Mammary epithelial cell (primary cell): ENCODE measurements at regions of chr3 and their contacts with region 1.

Region 1: GRCh38 chr3:150216041-150216811 is 191.9 kb upstream of the TSC22D2 start:
- DNase-seq: peak; percentile 56
- H3K4me3 ChIP-seq: no peak overlapping the region
- H3K27ac ChIP-seq: no peak overlapping the region
- H3K4me1 ChIP-seq: peaks cover 16% of the 10 kb centered on the region
- H3K27me3 ChIP-seq: no peaks in the 10 kb centered on the region
- CTCF ChIP-seq: no peak

Region 2: DNA sequence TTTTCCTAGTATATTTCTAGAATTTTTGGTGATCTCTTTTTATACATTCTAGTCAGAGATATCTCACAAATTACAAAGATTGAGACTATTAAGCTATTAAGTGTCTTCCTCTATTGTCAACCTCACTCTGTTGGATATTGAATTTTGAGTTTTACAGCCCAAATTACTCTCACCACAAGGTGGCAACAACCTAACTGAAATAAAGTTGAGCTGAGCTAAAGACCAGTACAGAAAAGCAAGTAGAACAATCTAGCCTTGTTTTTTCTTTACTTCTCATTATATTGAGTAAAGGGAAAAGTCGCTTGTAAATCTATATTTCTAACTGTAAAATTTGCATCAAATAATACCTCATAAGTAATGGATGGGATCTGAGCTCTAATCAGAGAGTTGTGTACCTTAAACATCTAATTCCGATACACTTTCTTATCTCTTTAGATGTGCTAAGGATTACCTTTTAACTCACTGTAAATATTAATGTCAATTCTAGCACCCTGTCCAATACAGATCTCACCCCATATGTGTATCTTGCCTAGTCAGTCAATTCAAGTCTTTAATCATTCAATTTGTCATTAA is 450.4 kb before region 1 on chr3:
- CTCF ChIA-PET with region 1: no interaction called
- dilution Hi-C with region 1: no loop called
- in situ Hi-C with region 1: no loop called
- intact Hi-C with region 1: loop called (anchors 5 kb)
- DNase-seq: peak; percentile 21
- H3K4me3 ChIP-seq: no peak overlapping the region
- H3K27ac ChIP-seq: no peak overlapping the region
- H3K4me1 ChIP-seq: no peaks in the 10 kb centered on the region
- H3K27me3 ChIP-seq: no peaks in the 10 kb centered on the region
- CTCF ChIP-seq: peak; percentile 37 to 62

Region 3: DNA sequence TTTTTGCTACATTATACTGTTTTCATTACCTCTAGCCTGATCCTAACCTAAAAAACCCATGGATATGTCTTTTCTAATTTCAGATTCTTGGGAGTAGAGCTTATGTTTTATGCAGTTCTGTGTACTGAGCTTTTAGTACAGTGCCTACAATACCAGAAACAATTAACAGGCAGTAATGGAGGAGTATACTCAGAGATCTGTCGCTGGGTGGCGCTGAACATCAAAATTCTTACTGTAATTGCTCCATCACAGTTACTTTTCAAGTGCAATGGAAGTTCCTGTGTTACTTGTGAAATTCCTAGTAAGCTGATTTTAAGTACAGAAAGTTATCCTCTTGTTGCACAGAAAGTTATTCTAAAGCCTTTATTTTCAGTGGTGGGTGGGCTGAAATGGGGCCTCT is 336.4 kb before region 1 on chr3:
- CTCF ChIA-PET with region 1: interaction called, 3 read pairs
- dilution Hi-C with region 1: no loop called
- in situ Hi-C with region 1: no loop called
- intact Hi-C with region 1: loop called (anchors 5 kb)
- DNase-seq: peak; percentile 49
- H3K4me3 ChIP-seq: no peak overlapping the region
- H3K27ac ChIP-seq: no peak overlapping the region
- H3K4me1 ChIP-seq: no peaks in the 10 kb centered on the region
- H3K27me3 ChIP-seq: no peaks in the 10 kb centered on the region
- CTCF ChIP-seq: peak; percentile 71 to 84

Region 4: DNA sequence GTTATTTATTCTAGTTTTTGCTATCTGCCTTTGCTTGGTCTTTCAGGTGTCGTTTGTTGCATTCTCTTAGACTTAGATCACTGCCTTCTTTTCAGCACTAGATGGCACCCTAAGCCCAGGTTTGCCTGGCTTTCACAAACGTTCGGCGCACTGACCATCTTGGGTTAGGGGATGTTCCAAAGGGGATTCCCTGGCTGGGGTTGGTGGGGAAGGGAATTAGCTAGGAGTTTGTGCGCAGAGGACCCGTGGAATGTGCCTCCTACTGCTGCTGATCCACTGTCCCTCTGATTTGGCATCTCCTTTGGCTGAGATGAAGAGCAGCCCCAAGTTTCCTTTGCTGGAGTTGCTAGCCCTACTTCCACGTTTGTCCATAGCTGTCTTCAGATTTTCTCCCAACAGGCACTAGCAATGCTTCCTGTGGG is 279.4 kb before region 1 on chr3:
- CTCF ChIA-PET with region 1: no interaction called
- dilution Hi-C with region 1: no loop called
- in situ Hi-C with region 1: no loop called
- intact Hi-C with region 1: loop called (anchors 1 kb)
- DNase-seq: peak; percentile 32
- H3K4me3 ChIP-seq: no peak overlapping the region
- H3K27ac ChIP-seq: no peak overlapping the region
- H3K4me1 ChIP-seq: no peaks in the 10 kb centered on the region
- H3K27me3 ChIP-seq: no peaks in the 10 kb centered on the region
- CTCF ChIP-seq: peak; percentile 78 to 81

Region 5: DNA sequence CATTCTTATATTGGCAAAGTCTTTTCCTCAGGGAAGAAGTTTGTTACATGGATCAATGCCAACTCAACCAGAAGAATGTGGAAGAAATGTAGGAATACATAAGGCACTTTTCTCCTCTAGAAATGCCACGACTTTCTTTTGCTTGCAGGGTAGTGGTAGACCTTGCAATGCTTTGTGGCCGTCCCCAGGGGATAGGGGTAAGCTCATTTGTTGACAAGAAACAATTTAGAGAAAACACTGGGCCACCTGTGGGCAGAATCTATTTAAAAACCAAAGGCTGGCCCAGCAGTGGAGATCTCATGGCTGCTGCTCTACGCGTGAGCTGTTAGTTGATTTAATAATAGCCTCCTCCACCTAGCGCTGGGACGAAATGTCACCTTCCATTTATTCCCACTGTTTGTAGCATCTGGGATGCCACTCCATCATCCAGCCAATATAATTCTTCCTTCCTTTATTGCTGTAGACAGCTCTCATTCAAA is 180.9 kb before region 1 on chr3:
- CTCF ChIA-PET with region 1: no interaction called
- dilution Hi-C with region 1: no loop called
- in situ Hi-C with region 1: no loop called
- intact Hi-C with region 1: no loop called
- DNase-seq: no peak
- H3K4me3 ChIP-seq: no peak overlapping the region
- H3K27ac ChIP-seq: no peak overlapping the region
- H3K4me1 ChIP-seq: no peaks in the 10 kb centered on the region
- H3K27me3 ChIP-seq: peaks cover 2% of the 10 kb centered on the region
- CTCF ChIP-seq: no peak

Region 6: DNA sequence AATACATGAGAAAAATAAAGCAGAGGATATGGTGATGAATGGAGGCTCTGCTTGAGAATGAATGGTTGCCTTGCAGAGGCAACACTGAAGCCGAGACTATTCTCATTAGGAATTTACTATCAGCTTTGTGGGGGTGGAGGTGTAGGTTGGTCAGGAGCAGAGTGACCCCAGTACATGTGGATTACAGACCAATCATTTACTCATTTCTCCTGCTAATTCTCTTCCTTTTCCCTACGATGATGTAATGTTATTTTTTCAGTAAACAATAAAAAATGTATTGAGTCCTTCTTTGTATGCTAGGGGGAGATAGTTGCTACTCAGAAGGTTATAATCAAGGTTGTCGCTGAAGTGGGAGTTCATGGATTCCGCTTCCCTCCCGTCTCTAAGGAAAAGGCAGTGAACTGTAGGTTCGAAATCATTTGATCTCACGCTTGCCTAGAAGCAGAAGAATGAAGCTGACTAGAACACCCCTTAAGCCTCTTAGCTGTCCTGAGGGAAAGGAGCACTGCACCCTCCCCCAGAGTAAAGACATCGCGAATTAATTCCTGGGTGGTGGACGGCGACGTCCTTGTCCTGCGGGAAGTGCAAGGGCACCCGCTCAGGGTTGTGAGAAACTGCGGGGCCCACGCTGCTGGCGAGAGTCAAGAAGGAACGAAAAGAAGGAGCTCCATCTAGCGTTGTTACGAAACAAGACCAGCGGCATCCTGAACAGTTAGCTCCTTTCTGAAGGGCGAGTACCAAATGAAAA is 32.4 kb before region 1 on chr3:
- CTCF ChIA-PET with region 1: no interaction called
- dilution Hi-C with region 1: no loop called
- in situ Hi-C with region 1: no loop called
- intact Hi-C with region 1: loop called (anchors 1 kb)
- DNase-seq: peak; percentile 68
- H3K4me3 ChIP-seq: peak overlapping the region; percentile 10 to 44 (median 29)
- H3K27ac ChIP-seq: no peak overlapping the region
- H3K4me1 ChIP-seq: peaks cover 12% of the 10 kb centered on the region
- H3K27me3 ChIP-seq: no peaks in the 10 kb centered on the region
- CTCF ChIP-seq: peak; percentile 57 to 79

Region 7: DNA sequence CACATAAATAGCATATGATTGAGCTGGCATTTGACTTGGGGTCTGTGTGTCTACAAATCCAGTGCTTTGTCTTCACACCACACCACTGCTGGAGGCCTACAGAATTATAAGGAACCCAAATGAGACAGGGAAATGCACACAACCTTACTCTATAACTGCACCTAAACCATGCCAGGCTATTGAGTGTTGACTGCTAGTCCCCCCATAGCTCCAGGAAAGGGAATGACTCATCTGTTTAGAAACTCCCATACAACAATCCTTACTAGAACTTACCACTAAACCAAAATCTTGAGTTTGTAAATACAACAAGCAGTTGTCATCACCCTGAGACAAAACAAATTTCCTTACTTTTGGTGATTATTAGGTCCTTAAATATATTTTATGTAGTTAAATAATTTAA is 175.0 kb after region 1 on chr3:
- CTCF ChIA-PET with region 1: no interaction called
- dilution Hi-C with region 1: no loop called
- in situ Hi-C with region 1: no loop called
- intact Hi-C with region 1: no loop called
- DNase-seq: no peak
- H3K4me3 ChIP-seq: no peak overlapping the region
- H3K27ac ChIP-seq: no peak overlapping the region
- H3K4me1 ChIP-seq: peaks cover 8% of the 10 kb centered on the region
- H3K27me3 ChIP-seq: no peaks in the 10 kb centered on the region
- CTCF ChIP-seq: no peak